GM12878 (cell line): ENCODE measurements at regions of chr14 and their contacts with region 1.

Region 1: GRCh38 chr14:97804056-97804455 is 1006.9 kb downstream of the VRK1 start:
- DNase-seq: no peak
- ATAC-seq: no peak
- H3K4me3 ChIP-seq: no peak overlapping the region
- H3K27ac ChIP-seq: no peak overlapping the region
- H3K4me1 ChIP-seq: no peaks in the 10 kb centered on the region
- H3K27me3 ChIP-seq: no peaks in the 10 kb centered on the region; a peak in 1 of 4 replicates
- CTCF ChIP-seq: no peak
- EP300 ChIP-seq: no peak
- POLR2A ChIP-seq: no peak
- RAD21 ChIP-seq: no peak

Region 2: GRCh38 chr14:97319691-97320090 is 484.4 kb before region 1 on chr14:
- CTCF ChIA-PET with region 1: no interaction called
- POLR2A ChIA-PET with region 1: no interaction called
- RAD21 ChIA-PET with region 1: no interaction called
- SMC1A ChIA-PET with region 1: no interaction called
- in situ Hi-C with region 1: no loop called
- intact Hi-C with region 1: no loop called
- DNase-seq: no peak
- ATAC-seq: no peak; the same call in 2 of the 3 replicates
- H3K4me3 ChIP-seq: no peak overlapping the region
- H3K27ac ChIP-seq: no peak overlapping the region
- H3K4me1 ChIP-seq: peaks cover 8% of the 10 kb centered on the region
- H3K27me3 ChIP-seq: no peaks in the 10 kb centered on the region
- CTCF ChIP-seq: no peak
- EP300 ChIP-seq: no peak
- POLR2A ChIP-seq: no peak
- RAD21 ChIP-seq: no peak

Region 3: DNA sequence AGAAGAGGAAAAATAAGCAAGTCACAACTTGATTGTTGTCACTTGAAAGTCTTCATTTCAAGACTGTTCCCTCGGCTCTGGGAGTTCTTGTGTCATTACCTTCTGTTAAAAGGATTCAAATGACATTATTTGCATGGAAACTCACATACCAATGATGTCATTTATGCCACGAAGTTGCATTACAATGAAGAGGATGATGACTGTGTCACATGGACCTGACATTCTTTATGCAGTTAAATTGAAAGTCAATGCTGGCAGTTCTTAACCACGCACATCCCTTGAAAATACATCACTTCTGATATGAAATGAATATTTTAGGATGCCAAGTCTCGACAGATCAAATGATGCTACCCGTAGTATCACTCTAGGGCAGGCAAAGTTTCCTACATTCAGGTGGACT is 62.6 kb after region 1 on chr14:
- CTCF ChIA-PET with region 1: no interaction called
- POLR2A ChIA-PET with region 1: no interaction called
- RAD21 ChIA-PET with region 1: no interaction called
- SMC1A ChIA-PET with region 1: no interaction called
- in situ Hi-C with region 1: no loop called
- intact Hi-C with region 1: loop called (anchors 2 kb)
- DNase-seq: no peak
- ATAC-seq: no peak
- H3K4me3 ChIP-seq: no peak overlapping the region
- H3K27ac ChIP-seq: no peak overlapping the region
- H3K4me1 ChIP-seq: no peaks in the 10 kb centered on the region
- H3K27me3 ChIP-seq: no peaks in the 10 kb centered on the region
- CTCF ChIP-seq: no peak
- EP300 ChIP-seq: no peak
- POLR2A ChIP-seq: no peak
- RAD21 ChIP-seq: no peak